Kidney (tissue), 22 donors: ENCODE measurements at regions of chr4 and their contacts with region 1.

Region 1: GRCh38 chr4:185134307-185134869 is 8.7 kb upstream of the SLC25A4 start:
- DNase-seq: peak in 2 of 5 donors; percentile 48 to 71
- H3K4me3 ChIP-seq: no peak overlapping the region
- H3K27ac ChIP-seq: no peak overlapping the region
- H3K4me1 ChIP-seq: peaks cover 0 to 2% (median 0%) of the 10 kb centered on the region in 3 donors
- H3K27me3 ChIP-seq: no peaks in the 10 kb centered on the region
- CTCF ChIP-seq: peak; percentile 73

Region 2: GRCh38 chr4:185039508-185040273 is 94.7 kb before region 1 on chr4:
- intact Hi-C with region 1: loop called (anchors 10 kb)
- DNase-seq: peak in 3 of 5 donors; percentile 54 to 74 (median 56)
- H3K4me3 ChIP-seq: peak overlapping the region in 2 of 3 donors; percentile 29 to 40
- H3K27ac ChIP-seq: no peak overlapping the region
- H3K4me1 ChIP-seq: peaks cover 0 to 4% (median 0%) of the 10 kb centered on the region in 3 donors
- H3K27me3 ChIP-seq: no peaks in the 10 kb centered on the region
- CTCF ChIP-seq: peak; percentile 83

Region 3: GRCh38 chr4:185369731-185370130 is 235.3 kb after region 1 on chr4:
- intact Hi-C with region 1: no loop called
- DNase-seq: no peak
- H3K4me3 ChIP-seq: no peak overlapping the region
- H3K27ac ChIP-seq: no peak overlapping the region
- H3K4me1 ChIP-seq: no peaks in the 10 kb centered on the region
- H3K27me3 ChIP-seq: no peaks in the 10 kb centered on the region
- CTCF ChIP-seq: no peak

Region 4: GRCh38 chr4:185742766-185743165 is 608.4 kb after region 1 on chr4:
- intact Hi-C with region 1: no loop called
- DNase-seq: no peak
- H3K4me3 ChIP-seq: no peak overlapping the region
- H3K27ac ChIP-seq: no peak overlapping the region
- H3K4me1 ChIP-seq: peaks cover 0 to 17% (median 9%) of the 10 kb centered on the region in 3 donors
- H3K27me3 ChIP-seq: no peaks in the 10 kb centered on the region
- CTCF ChIP-seq: no peak